Right ventricle myocardium inferior (tissue), 1 donor: ENCODE measurements at regions of chr1 and their contacts with region 1.

Region 1: GRCh38 chr1:3283849-3284248 is 170.6 kb upstream of the ARHGEF16 start:
- DNase-seq: no peak
- ATAC-seq: peak; percentile 77

Region 2: DNA sequence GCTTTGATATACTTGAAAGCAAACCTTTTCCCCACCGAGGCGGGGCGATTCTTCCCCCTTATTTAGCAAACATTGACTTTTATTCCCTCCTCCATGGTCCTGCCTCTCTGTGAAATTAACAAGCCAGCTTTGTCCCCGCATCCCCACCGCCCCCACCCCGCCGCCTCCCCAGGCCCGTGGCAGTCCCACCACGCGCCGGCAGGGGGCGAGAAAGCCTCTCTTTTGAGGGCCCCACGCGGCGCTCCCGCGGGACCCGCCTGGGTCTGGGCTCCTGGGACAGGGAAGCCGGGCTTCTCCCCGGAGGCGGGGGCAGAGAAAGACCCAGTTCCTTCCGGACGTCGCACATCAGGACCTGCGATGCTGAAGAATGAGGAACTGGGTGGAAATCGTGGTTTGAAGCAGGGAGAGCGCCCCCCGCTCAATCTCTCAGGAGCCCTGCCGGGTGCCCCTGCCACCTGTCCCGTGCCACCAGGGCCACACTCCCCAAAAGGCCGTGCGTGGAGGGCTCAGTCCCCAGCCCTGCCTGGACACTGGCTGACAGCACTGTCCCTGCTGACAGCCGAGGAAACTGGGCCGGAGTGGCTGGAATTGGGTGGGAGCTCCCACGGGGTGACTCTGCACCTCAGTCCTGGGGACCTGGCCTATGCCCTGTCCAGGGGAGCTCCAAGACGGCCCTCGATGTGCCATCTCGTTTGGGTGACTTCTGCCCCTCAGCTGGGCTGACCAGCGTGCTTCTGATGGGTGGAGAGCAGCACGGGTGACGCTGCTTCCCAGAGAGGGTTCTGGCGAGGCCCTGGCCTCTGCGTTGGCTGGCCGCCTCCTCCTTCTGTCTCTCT is 271.2 kb before region 1 on chr1:
- intact Hi-C with region 1: loop called (anchors 5 kb)
- DNase-seq: peak; percentile 79
- ATAC-seq: peak; percentile 78

Region 3: GRCh38 chr1:3069491-3070303 is 214.2 kb before region 1 on chr1:
- intact Hi-C with region 1: loop called (anchors 2 kb)
- DNase-seq: peak; percentile 55
- ATAC-seq: peak; percentile 39